GM12878 (cell line): ENCODE measurements at regions of chr1 and their contacts with region 1.

Region 1: GRCh38 chr1:167676205-167676915 is 45.4 kb upstream of the MPZL1 start:
- DNase-seq: peak; percentile 88
- ATAC-seq: peak; percentile 76
- H3K4me3 ChIP-seq: peak overlapping the region; percentile 35; the same call in 1 of the 2 replicates
- H3K27ac ChIP-seq: peak overlapping the region; percentile 93
- H3K4me1 ChIP-seq: peaks cover 85% of the 10 kb centered on the region
- H3K27me3 ChIP-seq: no peaks in the 10 kb centered on the region
- CTCF ChIP-seq: peak in 2 of 3 experiments; percentile 5 to 12; a peak in 2 of 6 replicates
- EP300 ChIP-seq: peak; percentile 10 to 11; a peak in 1 of 4 replicates
- POLR2A ChIP-seq: no peak
- RAD21 ChIP-seq: no peak

Region 2: DNA sequence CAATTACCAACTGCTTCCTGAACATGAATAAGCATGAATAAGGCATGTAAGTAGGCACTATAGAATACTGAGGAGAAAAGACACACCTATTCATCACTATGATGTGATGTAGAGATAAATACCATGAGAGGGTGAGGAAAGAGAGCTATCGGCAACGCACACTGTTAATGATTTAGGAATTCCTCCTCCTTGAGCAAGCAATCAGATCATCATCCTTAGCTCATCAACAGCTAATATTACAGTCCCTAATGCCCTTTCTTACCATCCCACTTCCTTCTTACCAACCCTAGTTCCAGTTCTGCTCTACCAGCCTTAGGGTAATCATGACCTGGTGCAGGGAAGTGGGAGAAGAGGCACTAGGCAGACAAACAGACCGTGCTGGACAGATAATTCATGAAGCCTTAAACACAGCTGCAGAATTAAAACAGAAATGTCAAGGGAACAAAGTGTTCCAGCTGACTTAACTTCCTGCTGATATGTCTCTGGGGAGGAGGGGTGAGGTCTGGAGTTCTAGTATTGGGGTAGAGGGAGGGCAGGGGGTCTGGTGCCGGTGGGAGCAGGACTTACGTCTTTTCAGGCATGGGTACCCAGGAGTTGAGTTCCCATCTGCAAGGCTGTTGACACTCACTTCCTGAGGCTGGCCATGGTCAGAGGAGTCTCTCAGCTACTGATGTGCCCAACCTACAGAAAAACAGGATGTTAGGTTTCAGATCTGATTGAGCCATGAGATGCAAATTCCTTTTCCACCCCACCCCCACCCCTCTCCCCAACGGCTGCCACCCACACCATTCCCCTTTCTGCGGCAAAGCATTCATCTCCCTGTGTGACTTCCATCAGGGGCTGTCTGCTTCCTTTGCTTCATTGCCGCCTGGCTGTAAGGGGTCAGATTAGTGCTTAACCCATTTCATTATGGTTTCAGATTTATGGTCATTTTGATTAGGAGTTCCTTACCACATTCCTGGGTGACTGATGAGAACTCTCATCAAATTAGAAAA is 58.9 kb before region 1 on chr1:
- CTCF ChIA-PET with region 1: interaction called, 6 read pairs
- POLR2A ChIA-PET with region 1: interaction called, 4 read pairs
- RAD21 ChIA-PET with region 1: interaction called, 3 read pairs
- SMC1A ChIA-PET with region 1: interaction called, 37 read pairs
- in situ Hi-C with region 1: no loop called
- intact Hi-C with region 1: no loop called
- DNase-seq: peak; percentile 74
- ATAC-seq: peak; percentile 87
- H3K4me3 ChIP-seq: peak overlapping the region; percentile 62
- H3K27ac ChIP-seq: peak overlapping the region; percentile 70
- H3K4me1 ChIP-seq: peaks cover 22% of the 10 kb centered on the region
- H3K27me3 ChIP-seq: no peaks in the 10 kb centered on the region
- CTCF ChIP-seq: no peak
- EP300 ChIP-seq: no peak
- POLR2A ChIP-seq: peak; percentile 58
- RAD21 ChIP-seq: no peak

Region 3: GRCh38 chr1:167635156-167635648 is 41.2 kb before region 1 on chr1:
- CTCF ChIA-PET with region 1: interaction called, 12 read pairs
- POLR2A ChIA-PET with region 1: interaction called, 84 read pairs
- RAD21 ChIA-PET with region 1: interaction called, 100 read pairs
- SMC1A ChIA-PET with region 1: interaction called, 170 read pairs
- in situ Hi-C with region 1: no loop called
- intact Hi-C with region 1: no loop called
- DNase-seq: no peak
- ATAC-seq: no peak
- H3K4me3 ChIP-seq: peak overlapping the region; percentile 41; the same call in 1 of the 2 replicates
- H3K27ac ChIP-seq: 0 out of 2 replicates have a peak overlapping the region, but pooled peaks have one; percentile 79
- H3K4me1 ChIP-seq: peaks cover 43% of the 10 kb centered on the region
- H3K27me3 ChIP-seq: no peaks in the 10 kb centered on the region
- CTCF ChIP-seq: no peak
- EP300 ChIP-seq: no peak
- POLR2A ChIP-seq: no peak
- RAD21 ChIP-seq: no peak

Region 4: DNA sequence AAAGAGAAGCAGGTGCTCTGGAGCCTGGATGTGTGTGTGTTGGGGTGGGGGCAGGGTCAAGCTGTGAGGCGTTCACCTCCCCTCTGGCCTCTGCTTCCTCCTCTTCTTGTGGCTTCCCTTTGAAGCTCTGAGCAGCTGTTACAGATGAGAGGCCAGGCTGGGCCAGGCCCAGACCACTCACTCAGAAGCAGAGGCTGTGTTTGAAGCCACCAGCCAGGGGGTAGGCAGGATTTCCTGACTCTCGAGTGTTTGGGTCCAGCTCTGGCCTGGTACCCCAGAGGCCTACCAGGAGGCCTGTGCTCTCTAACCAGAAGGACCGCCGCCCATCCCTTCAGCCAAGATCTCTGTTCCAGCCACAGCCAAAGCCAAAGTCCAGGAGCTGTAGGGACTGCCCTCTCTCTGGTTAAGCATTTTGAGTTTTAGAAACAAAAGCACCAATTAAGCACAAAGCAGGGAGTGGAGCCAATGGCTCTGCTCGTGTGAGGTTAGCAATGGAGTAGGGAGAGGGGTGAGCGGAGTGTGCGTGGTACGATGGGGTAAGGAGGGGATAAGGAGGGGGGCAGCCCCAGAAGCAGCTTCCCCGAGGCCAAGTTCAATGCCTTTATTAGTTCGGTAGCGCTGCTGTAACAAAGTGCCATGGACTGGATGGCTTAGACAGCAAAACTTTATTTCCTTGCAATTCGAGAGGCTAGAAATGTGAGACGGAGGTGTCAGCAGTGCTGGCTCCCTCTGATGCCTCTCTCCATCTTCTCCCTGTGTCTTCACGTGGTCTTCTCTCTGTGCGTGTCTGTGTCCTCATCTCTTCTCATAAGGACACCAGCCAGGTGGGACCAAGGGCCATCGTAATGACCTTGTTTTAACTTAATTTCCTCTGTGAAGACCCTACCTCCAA is 25.8 kb before region 1 on chr1:
- CTCF ChIA-PET with region 1: no interaction called
- POLR2A ChIA-PET with region 1: interaction called, 10 read pairs
- RAD21 ChIA-PET with region 1: interaction called, 5 read pairs
- SMC1A ChIA-PET with region 1: interaction called, 7 read pairs
- in situ Hi-C with region 1: no loop called
- intact Hi-C with region 1: no loop called
- DNase-seq: no peak
- ATAC-seq: peak; percentile 92
- H3K4me3 ChIP-seq: no peak overlapping the region
- H3K27ac ChIP-seq: peak overlapping the region; percentile 55
- H3K4me1 ChIP-seq: peaks cover 39% of the 10 kb centered on the region
- H3K27me3 ChIP-seq: no peaks in the 10 kb centered on the region
- CTCF ChIP-seq: no peak
- EP300 ChIP-seq: no peak
- POLR2A ChIP-seq: peak; percentile 23; the same call in 1 of the 2 replicates
- RAD21 ChIP-seq: no peak

Region 5: DNA sequence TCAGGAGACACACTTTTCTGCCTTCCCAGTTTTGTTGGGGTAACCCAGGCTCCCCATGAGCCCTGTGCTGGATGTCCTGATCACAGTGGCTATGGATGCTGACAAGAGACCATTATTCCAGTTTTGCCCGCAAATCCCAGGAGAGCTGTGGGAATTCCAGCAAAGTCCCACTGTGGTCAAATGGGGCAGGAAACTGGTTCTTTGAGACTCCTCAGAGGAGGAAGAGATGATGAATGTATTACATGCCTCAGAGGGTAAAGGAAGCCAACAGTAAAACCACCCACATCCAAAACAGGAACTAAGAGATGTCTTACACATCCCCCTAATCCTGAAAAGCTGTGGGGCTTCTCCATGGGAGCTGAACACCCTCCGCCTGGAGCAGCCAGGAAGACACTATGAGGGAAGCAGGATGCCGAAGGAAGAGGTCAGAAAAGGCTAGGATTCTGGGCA is 32.6 kb after region 1 on chr1:
- CTCF ChIA-PET with region 1: interaction called, 8 read pairs
- POLR2A ChIA-PET with region 1: no interaction called
- RAD21 ChIA-PET with region 1: interaction called, 4 read pairs
- SMC1A ChIA-PET with region 1: interaction called, 13 read pairs
- in situ Hi-C with region 1: no loop called
- intact Hi-C with region 1: no loop called
- DNase-seq: peak; percentile 63
- ATAC-seq: peak; percentile 66
- H3K4me3 ChIP-seq: no peak overlapping the region; the same call in 1 of the 2 replicates
- H3K27ac ChIP-seq: peak overlapping the region; percentile 76
- H3K4me1 ChIP-seq: peaks cover 53% of the 10 kb centered on the region
- H3K27me3 ChIP-seq: no peaks in the 10 kb centered on the region
- CTCF ChIP-seq: no peak
- EP300 ChIP-seq: 0 out of 4 replicates have a peak, but pooled peaks of 1 of the 2 experiments have one; percentile 10
- POLR2A ChIP-seq: no peak
- RAD21 ChIP-seq: no peak

Region 6: DNA sequence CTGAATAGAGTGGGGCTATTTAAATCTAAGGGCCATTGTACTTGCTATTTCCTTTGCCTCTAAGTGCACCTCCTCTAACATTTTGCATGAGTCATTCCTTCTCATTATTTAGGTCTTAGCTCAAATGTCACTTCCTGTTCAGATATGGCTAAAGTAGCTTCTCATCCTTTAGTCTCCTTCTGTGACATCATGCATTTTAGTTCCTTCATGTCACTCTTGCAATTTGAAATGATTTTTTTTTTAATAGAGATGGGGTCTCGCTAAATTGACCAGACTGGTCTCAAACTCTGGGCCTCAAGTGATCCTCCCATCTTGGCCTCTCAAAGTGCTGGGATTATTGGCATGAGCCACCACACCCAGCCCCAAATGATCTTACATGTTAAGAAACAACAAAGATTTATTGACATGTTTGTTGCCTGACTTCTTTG is 610.9 kb after region 1 on chr1:
- CTCF ChIA-PET with region 1: no interaction called
- POLR2A ChIA-PET with region 1: no interaction called
- RAD21 ChIA-PET with region 1: no interaction called
- SMC1A ChIA-PET with region 1: no interaction called
- in situ Hi-C with region 1: no loop called
- intact Hi-C with region 1: no loop called
- DNase-seq: no peak
- ATAC-seq: peak; percentile 56
- H3K4me3 ChIP-seq: no peak overlapping the region
- H3K27ac ChIP-seq: no peak overlapping the region
- H3K4me1 ChIP-seq: no peaks in the 10 kb centered on the region
- H3K27me3 ChIP-seq: no peaks in the 10 kb centered on the region
- CTCF ChIP-seq: no peak
- EP300 ChIP-seq: no peak
- POLR2A ChIP-seq: no peak
- RAD21 ChIP-seq: no peak